Common myeloid progenitor, CD34-positive (primary cell): ENCODE measurements at regions of chr3 and their contacts with region 1.

Region 1: GRCh38 chr3:183825456-183826161 is at the start of gene MAP6D1:
- DNase-seq: peak; percentile 67 to 78 (median 73)
- H3K4me3 ChIP-seq: peak within 1 kb of the TSS; percentile 33 to 83 (median 73)
- H3K27ac ChIP-seq: no peak within 1 kb of the TSS
- H3K4me1 ChIP-seq: peaks cover 5 to 20% (median 17%) of the 10 kb centered on the region in 4 experiments
- H3K27me3 ChIP-seq: no peaks in the 10 kb centered on the region

Region 2: GRCh38 chr3:183734750-183735494 is 90.7 kb before region 1 on chr3:
- CTCF ChIA-PET with region 1: no interaction called
- POLR2A ChIA-PET with region 1: no interaction called
- DNase-seq: no peak
- H3K4me3 ChIP-seq: no peak overlapping the region
- H3K27ac ChIP-seq: no peak overlapping the region
- H3K4me1 ChIP-seq: no peaks in the 10 kb centered on the region
- H3K27me3 ChIP-seq: no peaks in the 10 kb centered on the region

Region 3: GRCh38 chr3:183815563-183815940 is 10.1 kb before region 1 on chr3:
- CTCF ChIA-PET with region 1: interaction called, 13 read pairs
- POLR2A ChIA-PET with region 1: no interaction called
- DNase-seq: no peak
- H3K4me3 ChIP-seq: no peak overlapping the region
- H3K27ac ChIP-seq: no peak overlapping the region
- H3K4me1 ChIP-seq: no peaks in the 10 kb centered on the region
- H3K27me3 ChIP-seq: no peaks in the 10 kb centered on the region

Region 4: GRCh38 chr3:183844606-183845005 is 19.0 kb after region 1 on chr3:
- CTCF ChIA-PET with region 1: interaction called, 15 read pairs
- POLR2A ChIA-PET with region 1: interaction called, 3 read pairs
- DNase-seq: no peak
- H3K4me3 ChIP-seq: no peak overlapping the region
- H3K27ac ChIP-seq: no peak overlapping the region
- H3K4me1 ChIP-seq: peaks cover 0 to 6% (median 1%) of the 10 kb centered on the region in 4 experiments
- H3K27me3 ChIP-seq: no peaks in the 10 kb centered on the region

Region 5: GRCh38 chr3:183884427-183885296 is 59.1 kb after region 1 on chr3 and contains the start of gene PARL:
- CTCF ChIA-PET with region 1: interaction called, 26 read pairs
- POLR2A ChIA-PET with region 1: no interaction called
- DNase-seq: peak; percentile 92 to 95 (median 95)
- H3K4me3 ChIP-seq: peak within 1 kb of the TSS; percentile 73 to 98 (median 88)
- H3K27ac ChIP-seq: peak within 1 kb of the TSS; percentile 67 to 90
- H3K4me1 ChIP-seq: peaks cover 9 to 40% (median 28%) of the 10 kb centered on the region in 4 experiments
- H3K27me3 ChIP-seq: peaks cover 0 to 1% (median 0%) of the 10 kb centered on the region in 5 experiments